IMR-90 (cell line): ENCODE measurements at regions of chr12 and their contacts with region 1.

Region 1: DNA sequence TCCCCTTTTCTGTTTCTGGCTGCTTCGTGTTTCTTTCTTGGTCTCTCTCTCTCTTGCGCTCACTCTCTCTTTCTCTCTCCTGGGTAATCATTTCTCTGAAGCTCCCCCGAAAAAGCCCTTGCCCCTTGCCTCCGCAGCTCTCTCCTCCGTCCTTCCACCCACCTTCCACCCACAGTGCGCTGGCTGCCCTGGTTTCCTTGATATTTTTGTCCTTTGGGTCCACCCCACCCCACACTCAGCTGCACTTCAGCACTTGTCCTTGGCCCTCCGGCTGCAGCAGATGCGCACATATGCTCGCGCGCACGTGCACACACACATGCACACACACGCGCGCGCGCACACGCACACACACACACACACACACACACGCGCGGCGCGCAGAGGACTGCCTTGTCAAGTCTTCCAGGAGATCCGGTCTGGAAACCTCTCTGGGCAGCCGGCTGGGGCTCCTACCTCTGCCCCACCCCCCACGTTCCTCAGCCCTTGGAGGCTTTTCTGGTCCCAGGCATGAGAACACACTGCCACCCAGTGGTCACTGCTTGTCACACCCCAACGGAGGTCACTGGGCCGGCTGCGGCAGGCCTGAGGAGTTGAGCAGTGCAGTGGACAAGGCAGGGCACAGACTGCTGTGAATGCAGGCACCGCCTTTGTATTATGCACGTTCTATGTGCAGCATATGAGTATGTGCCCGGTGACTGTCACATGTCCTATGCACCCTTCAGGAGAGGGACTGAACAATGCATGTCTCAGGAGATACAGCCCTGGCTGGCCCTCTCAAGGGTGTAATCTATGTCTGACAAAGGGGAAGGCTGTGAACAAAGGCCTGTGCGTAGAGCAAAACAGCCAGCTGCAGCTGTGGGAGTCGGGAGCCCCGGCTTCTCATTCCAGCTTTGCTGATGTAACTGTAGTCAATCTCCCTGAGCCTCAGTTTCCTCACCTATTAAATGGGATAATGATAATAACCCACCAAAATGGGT is 6.5 kb downstream of the LAG3 start:
- DNase-seq: peak; percentile 91
- ATAC-seq: peak; percentile 99
- H3K4me3 ChIP-seq: peak overlapping the region; percentile 35
- H3K27ac ChIP-seq: peak overlapping the region; percentile 19; the same call in 1 of the 2 replicates
- H3K4me1 ChIP-seq: peaks cover 4% of the 10 kb centered on the region; the same call in 1 of the 2 replicates
- H3K27me3 ChIP-seq: no peaks in the 10 kb centered on the region
- CTCF ChIP-seq: peak; percentile 98
- POLR2A ChIP-seq: peak; percentile 48; the same call in 1 of the 2 replicates
- RAD21 ChIP-seq: peak; percentile 98

Region 2: GRCh38 chr12:6493497-6494257 is 285.2 kb before region 1 on chr12 and contains the start of gene NCAPD2:
- CTCF ChIA-PET with region 1: no interaction called
- POLR2A ChIA-PET with region 1: interaction called, 17 read pairs
- dilution Hi-C with region 1: no loop called
- in situ Hi-C with region 1: no loop called
- intact Hi-C with region 1: no loop called
- DNase-seq: peak; percentile 93
- ATAC-seq: peak; percentile 97
- H3K4me3 ChIP-seq: peak within 1 kb of the TSS; percentile 83
- H3K27ac ChIP-seq: peak within 1 kb of the TSS; percentile 94
- H3K4me1 ChIP-seq: no peaks in the 10 kb centered on the region; the same call in 1 of the 2 replicates
- H3K27me3 ChIP-seq: no peaks in the 10 kb centered on the region
- CTCF ChIP-seq: no peak
- POLR2A ChIP-seq: peak; percentile 93
- RAD21 ChIP-seq: no peak
- total RNA-seq, gene NCAPD2: 52.8 and 57.9 TPM in 2 replicates

Region 3: GRCh38 chr12:6582196-6582595 is 196.7 kb before region 1 on chr12:
- CTCF ChIA-PET with region 1: no interaction called
- POLR2A ChIA-PET with region 1: no interaction called
- dilution Hi-C with region 1: no loop called
- in situ Hi-C with region 1: no loop called
- intact Hi-C with region 1: no loop called
- DNase-seq: no peak
- ATAC-seq: no peak
- H3K4me3 ChIP-seq: no peak overlapping the region
- H3K27ac ChIP-seq: no peak overlapping the region
- H3K4me1 ChIP-seq: no peaks in the 10 kb centered on the region
- H3K27me3 ChIP-seq: no peaks in the 10 kb centered on the region
- CTCF ChIP-seq: no peak; the same call in 1 of the 2 replicates
- POLR2A ChIP-seq: no peak
- RAD21 ChIP-seq: no peak

Region 4: GRCh38 chr12:6613776-6614512 is 164.9 kb before region 1 on chr12:
- CTCF ChIA-PET with region 1: no interaction called
- POLR2A ChIA-PET with region 1: no interaction called
- dilution Hi-C with region 1: no loop called
- in situ Hi-C with region 1: no loop called
- intact Hi-C with region 1: loop called (anchors 1 kb)
- DNase-seq: peak; percentile 99
- ATAC-seq: peak; percentile 83
- H3K4me3 ChIP-seq: no peak overlapping the region
- H3K27ac ChIP-seq: peak overlapping the region; percentile 88
- H3K4me1 ChIP-seq: peaks cover 23% of the 10 kb centered on the region
- H3K27me3 ChIP-seq: no peaks in the 10 kb centered on the region
- CTCF ChIP-seq: 0 out of 2 replicates have a peak, but pooled peaks have one; percentile 8
- POLR2A ChIP-seq: no peak
- RAD21 ChIP-seq: no peak

Region 5: DNA sequence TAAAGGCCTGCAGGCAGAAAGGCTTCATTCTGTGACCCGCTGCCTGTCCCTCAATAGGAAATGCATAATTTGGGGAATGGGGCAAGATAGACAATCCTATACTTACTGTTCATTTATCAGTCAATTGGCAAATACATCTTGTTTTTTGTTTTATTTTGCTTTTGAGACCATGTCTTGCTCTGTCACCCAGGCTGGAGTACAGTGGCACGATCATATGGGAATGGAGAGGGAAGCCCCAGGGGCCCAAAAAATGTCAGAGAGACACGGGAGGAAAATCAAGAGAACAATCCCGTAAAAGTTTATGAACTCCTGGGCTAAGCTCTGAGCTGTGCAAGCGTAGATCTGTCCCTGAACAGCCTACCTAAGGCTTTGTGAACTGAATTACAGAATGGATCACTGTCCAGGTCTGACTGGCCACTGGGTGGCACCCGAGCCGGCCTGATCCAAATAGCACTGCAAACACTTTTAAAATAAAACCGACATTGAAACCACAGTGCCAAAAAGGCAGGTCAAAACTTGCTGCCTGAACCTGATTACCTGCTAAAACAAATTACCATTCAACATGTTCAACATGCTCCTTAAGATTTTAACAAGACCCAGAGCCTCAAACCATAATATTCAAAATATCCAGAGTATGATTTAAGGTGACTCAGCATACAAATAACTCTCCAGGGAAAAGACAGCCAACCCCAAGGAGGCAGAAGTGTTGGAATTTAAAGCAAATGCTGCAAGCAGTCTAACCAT is 43.2 kb before region 1 on chr12:
- CTCF ChIA-PET with region 1: no interaction called
- POLR2A ChIA-PET with region 1: no interaction called
- dilution Hi-C with region 1: no loop called
- in situ Hi-C with region 1: no loop called
- intact Hi-C with region 1: loop called (anchors 1 kb)
- DNase-seq: peak; percentile 58
- ATAC-seq: peak; percentile 94
- H3K4me3 ChIP-seq: no peak overlapping the region
- H3K27ac ChIP-seq: no peak overlapping the region
- H3K4me1 ChIP-seq: no peaks in the 10 kb centered on the region
- H3K27me3 ChIP-seq: no peaks in the 10 kb centered on the region
- CTCF ChIP-seq: peak; percentile 75
- POLR2A ChIP-seq: no peak
- RAD21 ChIP-seq: peak; percentile 66

Region 6: DNA sequence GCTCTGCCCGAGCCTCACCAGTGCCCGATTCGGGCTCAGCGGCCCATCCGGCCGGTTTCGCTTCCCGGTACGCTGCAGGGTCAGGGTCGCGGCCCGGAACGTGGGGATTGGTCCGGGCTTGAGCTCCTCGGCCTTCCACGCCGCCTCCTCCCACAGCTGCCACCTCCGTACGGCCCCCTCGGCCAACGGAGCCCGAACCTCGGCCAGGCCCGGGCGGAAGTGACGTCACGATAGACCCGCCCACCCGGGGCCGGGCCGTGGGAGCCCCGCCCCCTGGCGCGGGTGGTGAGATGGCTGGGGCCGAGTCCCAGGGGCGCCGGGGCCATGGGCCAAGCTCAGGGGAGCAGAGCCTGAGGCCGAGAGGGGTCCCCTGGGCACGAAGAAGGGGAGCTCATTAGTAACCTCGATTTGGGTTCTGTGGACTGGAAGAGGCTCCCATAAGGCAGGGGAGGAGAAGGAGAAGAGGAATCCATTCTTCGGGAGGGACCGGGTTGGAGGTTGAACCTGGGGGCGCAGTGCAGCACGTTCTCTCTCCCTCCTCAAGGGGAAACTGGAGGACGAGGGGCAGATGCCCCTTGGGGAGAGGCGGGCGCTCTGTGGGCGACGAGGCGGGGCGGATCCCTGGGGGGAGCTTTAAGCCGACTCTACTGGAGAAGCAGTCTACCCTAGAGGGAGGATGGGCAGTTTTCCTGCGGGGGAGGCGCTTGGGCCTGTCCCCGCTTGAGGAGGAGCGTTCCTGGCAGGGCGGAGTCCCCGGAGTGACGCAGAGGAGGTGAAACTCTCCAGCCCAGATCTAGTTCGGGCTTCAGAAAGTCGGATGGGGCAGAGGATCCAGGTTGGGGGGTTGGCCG is 25.7 kb before region 1 on chr12 and contains the start of gene MLF2:
- CTCF ChIA-PET with region 1: interaction called, 16 read pairs
- POLR2A ChIA-PET with region 1: no interaction called
- dilution Hi-C with region 1: no loop called
- in situ Hi-C with region 1: no loop called
- intact Hi-C with region 1: loop called (anchors 1 kb)
- DNase-seq: peak; percentile 99
- ATAC-seq: peak; percentile 93
- H3K4me3 ChIP-seq: peak within 1 kb of the TSS; percentile 71
- H3K27ac ChIP-seq: peak within 1 kb of the TSS; percentile 94
- H3K4me1 ChIP-seq: peaks cover 7% of the 10 kb centered on the region
- H3K27me3 ChIP-seq: no peaks in the 10 kb centered on the region
- CTCF ChIP-seq: no peak; the same call in 1 of the 2 replicates
- POLR2A ChIP-seq: no peak; the same call in none of the 2 replicates
- RAD21 ChIP-seq: no peak
- total RNA-seq, gene MLF2: 236 and 244 TPM in 2 replicates

Region 7: DNA sequence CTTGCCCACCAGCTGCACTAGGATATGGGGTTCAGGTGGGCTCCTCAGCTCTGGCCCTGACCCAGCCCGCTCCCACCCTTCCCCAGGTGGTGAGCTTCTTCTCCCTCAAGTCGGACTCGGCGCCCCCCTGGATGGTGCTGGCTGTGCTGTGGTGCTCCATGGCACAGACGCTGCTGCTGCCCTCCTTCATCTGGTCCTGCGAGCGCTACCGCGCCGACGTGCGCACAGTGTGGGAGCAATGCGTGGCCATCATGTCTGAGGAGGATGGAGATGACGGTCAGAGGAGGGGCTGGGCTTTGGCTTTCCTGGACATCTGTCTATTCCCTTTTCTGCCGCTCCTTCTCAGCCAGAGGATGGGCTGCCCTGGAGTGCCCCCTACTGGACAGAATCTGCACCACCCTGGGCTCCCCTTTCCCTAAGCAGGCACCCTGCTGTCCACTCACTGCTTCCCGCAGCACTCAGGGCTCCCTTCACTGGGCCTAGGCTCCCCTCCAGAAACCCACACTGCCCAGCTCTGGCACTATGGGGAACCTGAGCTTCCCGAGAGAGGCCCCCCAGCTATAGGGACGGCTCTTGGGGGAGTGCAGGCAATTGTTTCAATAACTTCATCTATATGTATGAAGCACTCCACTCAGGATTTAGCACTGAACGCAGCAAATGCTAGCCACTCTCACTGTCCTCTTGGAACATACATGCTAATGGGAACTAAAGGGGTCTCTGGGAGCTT is 46.7 kb after region 1 on chr12:
- CTCF ChIA-PET with region 1: interaction called, 3 read pairs
- POLR2A ChIA-PET with region 1: no interaction called
- dilution Hi-C with region 1: no loop called
- in situ Hi-C with region 1: no loop called
- intact Hi-C with region 1: loop called (anchors 1 kb)
- DNase-seq: peak; percentile 84
- ATAC-seq: peak; percentile 47
- H3K4me3 ChIP-seq: peak overlapping the region; percentile 18; the same call in 1 of the 2 replicates
- H3K27ac ChIP-seq: no peak overlapping the region
- H3K4me1 ChIP-seq: peaks cover 25% of the 10 kb centered on the region
- H3K27me3 ChIP-seq: peaks cover 2% of the 10 kb centered on the region; the same call in 1 of the 2 replicates
- CTCF ChIP-seq: peak; percentile 97
- POLR2A ChIP-seq: no peak
- RAD21 ChIP-seq: peak; percentile 96

Region 8: DNA sequence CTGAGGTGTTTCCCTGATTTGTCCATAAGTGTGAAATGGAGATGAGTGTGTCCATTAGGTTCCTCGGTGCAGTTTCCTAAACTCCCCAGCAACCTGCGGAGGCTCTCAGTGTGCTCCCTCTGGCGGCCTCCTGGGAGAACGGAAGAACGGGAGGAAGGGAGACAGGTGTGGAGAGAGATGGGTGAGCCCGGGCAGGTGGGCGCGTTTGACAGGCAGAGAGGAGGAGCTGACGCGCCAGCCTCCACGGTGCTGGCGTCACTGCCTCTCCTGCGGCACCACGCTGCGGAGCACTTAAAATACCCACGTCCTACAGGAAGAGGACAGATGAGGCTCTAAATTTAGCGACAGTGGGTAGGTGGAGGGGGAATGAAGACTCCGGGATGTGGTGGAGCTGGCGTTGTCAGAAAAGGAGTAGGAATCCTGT is 383.8 kb after region 1 on chr12:
- CTCF ChIA-PET with region 1: no interaction called
- POLR2A ChIA-PET with region 1: no interaction called
- dilution Hi-C with region 1: no loop called
- in situ Hi-C with region 1: no loop called
- intact Hi-C with region 1: no loop called
- DNase-seq: no peak
- ATAC-seq: peak; percentile 71
- H3K4me3 ChIP-seq: no peak overlapping the region
- H3K27ac ChIP-seq: no peak overlapping the region
- H3K4me1 ChIP-seq: no peaks in the 10 kb centered on the region
- H3K27me3 ChIP-seq: peaks cover 16% of the 10 kb centered on the region
- CTCF ChIP-seq: peak; percentile 37
- POLR2A ChIP-seq: no peak
- RAD21 ChIP-seq: no peak